ENCODE measurements at regions of chr9 and their contacts with region 1.

Region 1: GRCh38 chr9:127734747-127735529 is at the start of gene TOR2A:
- DNase-seq: peak; percentile 95 to 99
- H3K4me3 ChIP-seq: peak within 1 kb of the TSS; percentile 75 to 82 (median 81)
- H3K27ac ChIP-seq: peak within 1 kb of the TSS; percentile 92 to 95
- H3K4me1 ChIP-seq: peaks cover 0 to 5% of the 10 kb centered on the region in 2 donors
- H3K27me3 ChIP-seq: no peaks in the 10 kb centered on the region
- CTCF ChIP-seq: peak; percentile 91 to 99 (median 98)
- POLR2A ChIP-seq: no peak
- total RNA-seq, gene TOR2A: 9.5 to 16.7 (median 9.6) TPM

Region 2: GRCh38 chr9:127586537-127586936 is 148.4 kb before region 1 on chr9:
- intact Hi-C with region 1: loop called (anchors 5 kb)
- DNase-seq: peak; percentile 81 to 86
- H3K4me3 ChIP-seq: no peak overlapping the region
- H3K27ac ChIP-seq: no peak overlapping the region
- H3K4me1 ChIP-seq: no peaks in the 10 kb centered on the region
- H3K27me3 ChIP-seq: no peaks in the 10 kb centered on the region
- CTCF ChIP-seq: peak; percentile 94 to 97 (median 97)
- POLR2A ChIP-seq: no peak

Region 3: DNA sequence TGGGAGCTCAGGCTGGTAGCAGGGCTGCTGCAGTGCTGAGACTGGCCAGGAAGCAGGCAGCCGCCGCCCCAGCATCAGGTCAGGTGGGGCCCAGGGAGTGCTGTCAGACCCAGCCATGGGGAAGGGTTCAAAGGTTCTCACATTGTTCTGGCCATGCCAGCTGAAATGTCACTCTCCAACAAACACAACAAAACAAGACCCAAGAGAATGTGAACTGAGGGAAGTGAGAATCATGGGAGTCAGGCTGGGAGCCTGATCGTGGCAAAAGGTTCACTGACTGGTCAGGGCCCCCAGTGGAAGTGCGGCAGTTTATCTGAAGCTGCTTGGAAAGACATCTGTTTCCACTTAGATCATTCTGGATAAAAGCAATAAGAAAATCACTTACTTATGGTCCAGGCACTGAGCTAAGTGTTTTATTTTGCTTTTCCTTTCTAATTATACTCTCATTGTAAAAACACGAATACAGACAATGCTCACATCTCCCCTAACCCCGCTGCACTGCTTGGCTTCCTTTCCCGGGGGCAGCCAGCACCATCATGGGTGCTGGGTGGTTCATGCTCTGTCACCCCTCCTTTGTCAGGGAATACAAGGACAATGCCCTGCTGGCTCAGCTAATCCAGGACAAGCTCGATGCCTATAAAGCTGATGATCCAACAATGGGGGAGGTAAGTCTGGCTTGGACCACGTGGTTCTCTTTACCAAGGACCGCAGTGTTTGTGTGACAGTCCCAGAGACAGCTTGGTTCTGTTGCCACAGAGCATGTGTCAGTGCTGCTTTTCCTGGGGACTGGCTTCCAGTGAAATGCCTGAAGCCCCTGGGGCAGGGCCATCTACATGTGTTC is 70.1 kb before region 1 on chr9:
- intact Hi-C with region 1: no loop called
- DNase-seq: no peak
- H3K4me3 ChIP-seq: no peak overlapping the region
- H3K27ac ChIP-seq: peak overlapping the region; percentile 36 to 84
- H3K4me1 ChIP-seq: no peaks in the 10 kb centered on the region
- H3K27me3 ChIP-seq: no peaks in the 10 kb centered on the region
- CTCF ChIP-seq: no peak
- POLR2A ChIP-seq: no peak

Region 4: GRCh38 chr9:127785023-127785932 is 50.3 kb after region 1 on chr9:
- intact Hi-C with region 1: loop called (anchors 10 kb)
- DNase-seq: peak; percentile 79 to 88
- H3K4me3 ChIP-seq: peak overlapping the region; percentile 96 to 99 (median 98)
- H3K27ac ChIP-seq: peak overlapping the region; percentile 92 to 99
- H3K4me1 ChIP-seq: peaks cover 2 to 9% of the 10 kb centered on the region in 2 donors
- H3K27me3 ChIP-seq: no peaks in the 10 kb centered on the region
- CTCF ChIP-seq: peak; percentile 89 to 97 (median 96)
- POLR2A ChIP-seq: no peak

Region 5: GRCh38 chr9:127802576-127803443 is 67.9 kb after region 1 on chr9 and contains the start of gene FPGS:
- intact Hi-C with region 1: loop called (anchors 1 kb)
- DNase-seq: peak; percentile 79
- H3K4me3 ChIP-seq: peak within 1 kb of the TSS; percentile 66 to 77 (median 73)
- H3K27ac ChIP-seq: peak within 1 kb of the TSS; percentile 92 to 96
- H3K4me1 ChIP-seq: peaks cover 9 to 10% of the 10 kb centered on the region in 2 donors
- H3K27me3 ChIP-seq: no peaks in the 10 kb centered on the region
- CTCF ChIP-seq: no peak
- POLR2A ChIP-seq: no peak
- total RNA-seq, gene FPGS: 56.3 to 108 (median 78.6) TPM

Region 6: GRCh38 chr9:127869310-127870152 is 134.6 kb after region 1 on chr9:
- intact Hi-C with region 1: loop called (anchors 1 kb)
- DNase-seq: peak; percentile 76 to 84
- H3K4me3 ChIP-seq: no peak overlapping the region
- H3K27ac ChIP-seq: peak overlapping the region in 1 of 2 donors; percentile 8
- H3K4me1 ChIP-seq: peaks cover 3 to 10% of the 10 kb centered on the region in 2 donors
- H3K27me3 ChIP-seq: no peaks in the 10 kb centered on the region
- CTCF ChIP-seq: peak; percentile 70 to 94 (median 92)
- POLR2A ChIP-seq: no peak

Measured in breast epithelium (tissue), 4 donors.